ENCODE measurements at regions of chr19 and their contacts with region 1.

Region 1: DNA sequence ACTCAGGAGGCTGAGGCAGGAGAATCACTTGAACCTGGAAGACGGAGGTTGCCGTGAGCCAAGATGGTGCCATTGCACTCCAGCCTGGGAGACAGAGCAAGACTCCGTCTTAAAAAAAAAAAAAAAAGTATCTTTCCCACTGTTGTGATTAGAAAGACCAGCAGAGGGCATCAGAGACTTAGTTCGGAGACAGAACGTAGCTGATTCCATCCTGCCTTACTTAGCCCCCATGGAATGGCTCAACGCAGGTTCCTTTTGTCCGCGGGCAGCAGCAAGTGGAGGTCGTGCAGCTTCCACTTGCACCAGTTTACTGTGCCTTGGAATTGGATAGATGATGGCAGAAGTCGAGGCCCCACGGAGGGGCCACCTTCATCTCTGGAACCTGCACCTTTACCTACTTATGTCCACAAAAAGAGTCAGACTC is 8.1 kb downstream of the TIMM29 start:
- DNase-seq: peak; percentile 35
- ATAC-seq: peak; percentile 90
- H3K4me3 ChIP-seq: no peak overlapping the region
- H3K27ac ChIP-seq: no peak overlapping the region
- H3K4me1 ChIP-seq: no peaks in the 10 kb centered on the region; the same call in 1 of the 2 replicates
- H3K27me3 ChIP-seq: no peaks in the 10 kb centered on the region
- CTCF ChIP-seq: peak; percentile 64 to 70 (median 65)
- EP300 ChIP-seq: no peak
- POLR2A ChIP-seq: no peak
- RAD21 ChIP-seq: peak; percentile 82

Region 2: DNA sequence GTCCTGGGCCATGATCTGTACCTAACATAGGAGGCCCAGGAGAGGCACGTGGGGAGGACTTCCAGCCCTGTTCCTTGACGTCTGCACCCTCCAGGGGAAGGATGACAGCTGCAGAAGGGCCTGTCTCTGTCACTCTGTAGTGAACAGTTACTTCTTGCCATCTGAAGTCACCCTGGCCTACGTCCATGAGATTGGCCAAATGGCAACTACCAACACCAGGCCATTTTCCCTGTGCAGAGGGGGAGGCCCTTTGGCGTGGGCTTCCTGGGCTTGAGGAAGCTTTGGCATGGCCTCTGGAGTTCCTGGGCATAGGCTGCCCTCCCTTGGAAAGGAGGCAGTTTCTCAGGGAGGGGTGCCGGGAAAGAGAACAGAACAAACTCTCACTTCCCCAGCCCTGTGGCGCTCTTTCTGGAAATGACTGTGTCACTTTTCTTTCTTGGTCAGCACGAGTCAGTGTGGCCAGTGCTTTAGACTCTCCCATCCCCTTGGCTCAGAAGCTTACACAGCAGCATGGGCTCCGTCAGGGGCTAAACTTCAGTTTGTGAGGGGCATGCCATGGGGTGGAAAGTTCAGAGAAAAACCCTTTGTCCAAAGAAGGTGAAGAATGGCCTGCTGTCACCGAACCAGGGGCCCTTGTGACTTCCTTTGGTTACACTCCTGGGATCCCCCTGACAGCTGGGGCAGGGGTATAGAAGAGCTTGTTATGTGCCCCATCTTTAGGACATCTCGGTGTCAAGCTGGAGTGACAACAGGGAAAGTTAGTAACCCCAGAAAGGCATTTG is 60.0 kb before region 1 on chr19:
- CTCF ChIA-PET with region 1: interaction called, 16 read pairs
- POLR2A ChIA-PET with region 1: interaction called, 10 read pairs
- RAD21 ChIA-PET with region 1: interaction called, 4 read pairs
- SMC1A ChIA-PET with region 1: interaction called, 9 read pairs
- in situ Hi-C with region 1: no loop called
- intact Hi-C with region 1: no loop called
- DNase-seq: peak; percentile 79
- ATAC-seq: peak; percentile 80
- H3K4me3 ChIP-seq: peak overlapping the region; percentile 60
- H3K27ac ChIP-seq: peak overlapping the region; percentile 97
- H3K4me1 ChIP-seq: peaks cover 57% of the 10 kb centered on the region
- H3K27me3 ChIP-seq: no peaks in the 10 kb centered on the region
- CTCF ChIP-seq: no peak
- EP300 ChIP-seq: peak; percentile 61 to 96; a peak in 3 of 4 replicates
- POLR2A ChIP-seq: peak; percentile 64; the same call in 1 of the 2 replicates
- RAD21 ChIP-seq: no peak

Region 3: DNA sequence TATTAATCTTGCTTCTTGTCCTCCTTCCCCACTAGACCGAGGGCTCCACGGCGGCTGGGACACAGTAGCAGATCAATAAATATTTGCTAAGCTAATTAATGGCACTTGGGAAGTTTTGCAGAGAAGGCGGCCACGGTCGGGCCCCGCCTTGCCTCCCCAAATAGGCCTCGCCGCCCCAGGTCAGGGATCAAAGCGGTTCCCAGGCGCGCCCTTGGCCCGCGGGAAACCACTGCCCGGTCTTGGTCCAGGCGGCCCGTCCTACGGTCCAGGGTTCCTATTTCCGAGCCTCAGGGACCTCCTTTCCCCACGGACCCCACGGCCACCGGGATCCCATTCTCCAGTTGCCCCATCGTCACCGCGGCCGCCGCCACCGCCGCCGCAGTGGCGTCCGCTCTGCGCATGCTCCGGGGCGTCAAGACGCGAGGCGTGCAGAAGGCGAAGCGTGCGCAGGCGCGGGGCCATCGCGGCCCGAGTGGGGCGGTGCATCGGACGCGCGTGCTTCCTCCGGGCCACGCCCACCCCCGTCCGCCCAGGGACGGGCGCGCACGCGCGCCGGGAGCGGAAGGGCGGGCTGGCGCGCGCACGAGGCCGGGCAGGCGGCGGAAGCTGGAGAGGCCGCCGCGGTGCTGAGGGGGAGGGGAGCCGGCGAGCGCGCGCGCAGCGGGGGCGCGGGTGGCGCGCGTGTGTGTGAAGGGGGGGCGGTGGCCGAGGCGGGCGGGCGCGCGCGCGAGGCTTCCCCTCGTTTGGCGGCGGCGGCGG is 23.8 kb after region 1 on chr19 and contains the start of gene SMARCA4:
- CTCF ChIA-PET with region 1: interaction called, 25 read pairs
- POLR2A ChIA-PET with region 1: interaction called, 10 read pairs
- RAD21 ChIA-PET with region 1: interaction called, 19 read pairs
- SMC1A ChIA-PET with region 1: interaction called, 18 read pairs
- in situ Hi-C with region 1: no loop called
- intact Hi-C with region 1: no loop called
- DNase-seq: peak; percentile 83
- ATAC-seq: peak; percentile 77
- H3K4me3 ChIP-seq: peak within 1 kb of the TSS; percentile 98
- H3K27ac ChIP-seq: peak within 1 kb of the TSS; percentile 77
- H3K4me1 ChIP-seq: peaks cover 17% of the 10 kb centered on the region; the same call in 1 of the 2 replicates
- H3K27me3 ChIP-seq: no peaks in the 10 kb centered on the region
- CTCF ChIP-seq: no peak
- EP300 ChIP-seq: no peak
- POLR2A ChIP-seq: peak; percentile 97
- RAD21 ChIP-seq: no peak
- polyA plus RNA-seq, gene SMARCA4: 22.4 to 43.8 TPM

Region 4: GRCh38 chr19:10998045-10998533 is 61.4 kb after region 1 on chr19:
- CTCF ChIA-PET with region 1: interaction called, 14 read pairs
- POLR2A ChIA-PET with region 1: interaction called, 5 read pairs
- RAD21 ChIA-PET with region 1: interaction called, 3 read pairs
- SMC1A ChIA-PET with region 1: interaction called, 9 read pairs
- in situ Hi-C with region 1: no loop called
- intact Hi-C with region 1: loop called (anchors 10 kb)
- DNase-seq: no peak
- ATAC-seq: no peak
- H3K4me3 ChIP-seq: no peak overlapping the region
- H3K27ac ChIP-seq: no peak overlapping the region
- H3K4me1 ChIP-seq: no peaks in the 10 kb centered on the region
- H3K27me3 ChIP-seq: no peaks in the 10 kb centered on the region
- CTCF ChIP-seq: no peak
- EP300 ChIP-seq: no peak
- POLR2A ChIP-seq: no peak
- RAD21 ChIP-seq: no peak

Region 5: DNA sequence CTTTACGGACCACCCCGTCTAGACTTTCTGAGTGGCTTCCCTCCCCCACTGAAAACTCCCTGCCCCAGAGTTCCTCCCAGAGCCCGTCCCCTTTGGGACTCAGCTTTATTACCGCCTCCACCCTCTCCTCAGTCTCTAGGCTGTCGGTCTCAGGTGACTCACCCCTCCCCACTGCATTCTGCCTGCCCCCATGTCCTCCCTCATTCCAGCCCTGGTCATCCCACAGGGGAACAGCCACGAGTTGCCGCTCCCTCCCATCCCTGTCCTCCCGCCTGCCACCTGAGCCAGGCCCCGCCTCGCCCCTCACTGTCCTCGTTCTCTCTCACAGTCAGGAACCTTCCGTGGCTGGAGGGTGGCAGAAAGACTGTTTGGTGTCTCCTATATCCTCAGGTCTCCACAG is 81.5 kb after region 1 on chr19:
- CTCF ChIA-PET with region 1: interaction called, 10 read pairs
- POLR2A ChIA-PET with region 1: no interaction called
- RAD21 ChIA-PET with region 1: interaction called, 5 read pairs
- SMC1A ChIA-PET with region 1: interaction called, 3 read pairs
- in situ Hi-C with region 1: no loop called
- intact Hi-C with region 1: no loop called
- DNase-seq: no peak
- ATAC-seq: no peak
- H3K4me3 ChIP-seq: no peak overlapping the region
- H3K27ac ChIP-seq: no peak overlapping the region
- H3K4me1 ChIP-seq: no peaks in the 10 kb centered on the region
- H3K27me3 ChIP-seq: no peaks in the 10 kb centered on the region
- CTCF ChIP-seq: no peak
- EP300 ChIP-seq: no peak
- POLR2A ChIP-seq: no peak; the same call in 1 of the 2 replicates
- RAD21 ChIP-seq: no peak

Region 6: DNA sequence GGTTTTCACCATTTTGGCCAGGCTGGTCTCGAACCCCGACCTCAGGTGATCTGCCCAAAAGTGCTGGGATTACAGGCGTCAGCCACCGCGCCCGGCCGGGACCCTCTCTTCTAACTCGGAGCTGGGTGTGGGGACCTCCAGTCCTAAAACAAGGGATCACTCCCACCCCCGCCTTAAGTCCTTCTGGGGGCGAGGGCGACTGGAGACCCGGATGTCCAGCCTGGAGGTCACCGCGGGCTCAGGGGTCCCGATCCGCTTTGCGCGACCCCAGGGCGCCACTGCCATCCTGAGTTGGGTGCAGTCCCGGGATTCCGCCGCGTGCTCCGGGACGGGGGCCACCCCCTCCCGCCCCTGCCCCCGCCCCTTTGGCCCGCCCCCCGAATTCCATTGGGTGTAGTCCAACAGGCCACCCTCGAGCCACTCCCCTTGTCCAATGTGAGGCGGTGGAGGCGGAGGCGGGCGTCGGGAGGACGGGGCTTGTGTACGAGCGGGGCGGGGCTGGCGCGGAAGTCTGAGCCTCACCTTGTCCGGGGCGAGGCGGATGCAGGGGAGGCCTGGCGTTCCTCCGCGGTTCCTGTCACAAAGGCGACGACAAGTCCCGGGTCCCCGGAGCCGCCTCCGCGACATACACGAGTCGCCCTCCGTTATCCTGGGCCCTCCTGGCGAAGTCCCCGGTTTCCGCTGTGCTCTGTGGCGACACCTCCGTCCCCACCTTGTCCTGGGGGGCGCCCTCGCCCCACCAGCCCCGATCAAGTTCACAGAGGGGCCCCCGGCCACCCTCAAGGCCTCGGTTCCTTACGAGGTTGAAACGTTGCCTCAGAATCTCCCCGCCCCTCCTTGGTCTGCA is 153.6 kb after region 1 on chr19:
- CTCF ChIA-PET with region 1: interaction called, 10 read pairs
- POLR2A ChIA-PET with region 1: interaction called, 10 read pairs
- RAD21 ChIA-PET with region 1: interaction called, 5 read pairs
- SMC1A ChIA-PET with region 1: interaction called, 3 read pairs
- in situ Hi-C with region 1: no loop called
- intact Hi-C with region 1: no loop called
- DNase-seq: peak; percentile 76
- ATAC-seq: peak; percentile 88
- H3K4me3 ChIP-seq: peak overlapping the region; percentile 97
- H3K27ac ChIP-seq: peak overlapping the region; percentile 91
- H3K4me1 ChIP-seq: peaks cover 35% of the 10 kb centered on the region
- H3K27me3 ChIP-seq: no peaks in the 10 kb centered on the region
- CTCF ChIP-seq: peak in 2 of 3 experiments; percentile 12 to 16; a peak in 1 of 6 replicates
- EP300 ChIP-seq: no peak
- POLR2A ChIP-seq: peak; percentile 96
- RAD21 ChIP-seq: no peak

Measured in GM12878 (cell line).